ENCODE measurements at regions of chr3 and their contacts with region 1.

Region 1: DNA sequence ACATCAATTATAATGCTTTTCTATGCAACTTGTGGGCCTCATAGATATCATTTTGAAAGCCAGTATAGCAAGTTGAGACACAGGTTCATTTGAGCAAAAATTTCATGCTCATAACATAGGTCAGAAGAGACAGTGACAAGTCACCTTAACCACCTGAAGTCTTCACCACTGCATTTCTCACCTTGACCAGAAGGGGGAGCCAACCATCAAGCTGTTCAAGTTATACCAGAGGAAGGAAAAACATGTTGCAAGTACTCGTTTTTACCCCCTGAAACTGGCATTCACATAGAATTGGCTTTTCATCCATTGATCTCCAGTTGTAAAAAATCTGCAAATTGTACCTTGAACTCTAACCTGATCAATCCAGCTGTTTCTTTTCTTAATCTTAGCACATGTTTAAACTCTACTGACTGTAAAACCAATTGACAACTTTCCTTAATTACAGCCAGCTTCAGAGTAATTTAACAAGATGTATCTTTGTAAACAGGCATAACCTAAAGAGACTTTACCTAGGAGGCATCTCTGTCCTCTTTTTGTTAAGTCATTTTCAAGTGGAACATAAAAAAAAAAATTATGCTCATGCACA is 1.4 kb downstream of the LMOD3 start:
- DNase-seq: peak; percentile 86
- H3K4me3 ChIP-seq: no peak overlapping the region
- H3K27ac ChIP-seq: no peak overlapping the region
- H3K4me1 ChIP-seq: peaks cover 20% of the 10 kb centered on the region
- H3K27me3 ChIP-seq: no peaks in the 10 kb centered on the region
- CTCF ChIP-seq: peak; percentile 85 to 88
- POLR2A ChIP-seq: no peak

Region 2: DNA sequence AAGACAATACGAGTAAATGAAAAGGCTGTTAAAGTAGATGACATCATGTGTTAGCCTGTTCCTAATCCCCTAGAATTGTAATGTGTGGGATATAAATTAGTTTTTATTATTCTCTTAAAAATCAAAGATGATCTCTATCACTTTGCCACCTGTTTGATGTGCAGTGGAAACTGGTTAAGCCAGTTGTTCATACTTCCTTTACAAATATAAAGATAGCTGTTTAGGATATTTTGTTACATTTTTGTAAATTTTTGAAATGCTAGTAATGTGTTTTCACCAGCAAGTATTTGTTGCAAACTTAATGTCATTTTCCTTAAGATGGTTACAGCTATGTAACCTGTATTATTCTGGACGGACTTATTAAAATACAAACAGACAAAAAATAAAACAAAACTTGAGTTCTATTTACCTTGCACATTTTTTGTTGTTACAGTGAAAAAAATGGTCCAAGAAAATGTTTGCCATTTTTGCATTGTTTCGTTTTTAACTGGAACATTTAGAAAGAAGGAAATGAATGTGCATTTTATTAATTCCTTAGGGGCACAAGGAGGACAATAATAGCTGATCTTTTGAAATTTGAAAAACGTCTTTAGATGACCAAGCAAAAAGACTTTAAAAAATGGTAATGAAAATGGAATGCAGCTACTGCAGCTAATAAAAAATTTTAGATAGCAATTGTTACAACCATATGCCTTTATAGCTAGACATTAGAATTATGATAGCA is 15.8 kb before region 1 on chr3:
- CTCF ChIA-PET with region 1: interaction called, 26 read pairs
- POLR2A ChIA-PET with region 1: no interaction called
- dilution Hi-C with region 1: no loop called
- intact Hi-C with region 1: no loop called
- DNase-seq: no peak
- H3K4me3 ChIP-seq: no peak overlapping the region
- H3K27ac ChIP-seq: no peak overlapping the region
- H3K4me1 ChIP-seq: peaks cover 11% of the 10 kb centered on the region
- H3K27me3 ChIP-seq: no peaks in the 10 kb centered on the region
- CTCF ChIP-seq: no peak
- POLR2A ChIP-seq: no peak

Region 3: GRCh38 chr3:69143605-69144004 is 22.6 kb after region 1 on chr3:
- CTCF ChIA-PET with region 1: interaction called, 10 read pairs
- POLR2A ChIA-PET with region 1: no interaction called
- dilution Hi-C with region 1: no loop called
- intact Hi-C with region 1: no loop called
- DNase-seq: no peak
- H3K4me3 ChIP-seq: no peak overlapping the region
- H3K27ac ChIP-seq: no peak overlapping the region
- H3K4me1 ChIP-seq: no peaks in the 10 kb centered on the region
- H3K27me3 ChIP-seq: no peaks in the 10 kb centered on the region
- CTCF ChIP-seq: no peak
- POLR2A ChIP-seq: no peak

Region 4: DNA sequence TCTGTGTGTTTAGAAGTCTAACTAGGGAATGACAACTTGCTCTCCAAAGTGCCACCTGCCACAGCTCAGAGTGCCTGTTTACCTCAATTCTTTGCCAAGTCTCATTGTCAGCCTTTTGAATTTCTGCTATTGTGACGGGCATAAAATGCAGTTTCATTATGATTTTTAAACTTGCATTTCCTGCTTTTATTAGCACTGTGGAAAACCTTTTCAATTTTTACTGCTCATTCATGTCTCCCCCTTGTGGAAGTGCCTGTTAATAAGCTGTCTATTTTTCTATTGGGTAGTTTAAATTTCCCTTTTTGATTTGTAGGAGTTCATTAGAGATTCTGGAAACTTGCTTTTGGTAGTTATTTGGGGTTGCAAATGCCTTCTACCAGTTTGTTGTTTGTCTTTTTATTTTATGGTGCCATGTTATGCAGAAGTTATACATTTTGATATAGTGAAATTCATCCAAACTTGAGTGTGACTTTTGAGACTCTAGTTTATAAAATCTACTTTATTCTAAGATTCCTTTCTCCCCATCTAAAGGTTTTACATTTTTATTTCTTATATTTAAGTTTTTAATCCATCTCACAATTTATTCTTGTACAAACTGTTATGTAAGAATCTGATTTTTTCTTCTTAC is 318.8 kb after region 1 on chr3:
- CTCF ChIA-PET with region 1: interaction called, 20 read pairs
- POLR2A ChIA-PET with region 1: no interaction called
- dilution Hi-C with region 1: no loop called
- intact Hi-C with region 1: no loop called
- DNase-seq: peak; percentile 61
- H3K4me3 ChIP-seq: no peak overlapping the region
- H3K27ac ChIP-seq: no peak overlapping the region
- H3K4me1 ChIP-seq: no peaks in the 10 kb centered on the region
- H3K27me3 ChIP-seq: no peaks in the 10 kb centered on the region
- CTCF ChIP-seq: peak; percentile 41 to 58
- POLR2A ChIP-seq: no peak